Right ventricle myocardium inferior (tissue), 1 donor: ENCODE measurements at regions of chr1 and their contacts with region 1.

Region 1: GRCh38 chr1:116239620-116240310 is 128.6 kb downstream of the MAB21L3 start:
- DNase-seq: no peak
- ATAC-seq: no peak

Region 2: GRCh38 chr1:116075577-116076380 is 164.0 kb before region 1 on chr1:
- intact Hi-C with region 1: no loop called
- DNase-seq: no peak
- ATAC-seq: no peak

Region 3: GRCh38 chr1:116133696-116134650 is 105.8 kb before region 1 on chr1:
- intact Hi-C with region 1: no loop called
- DNase-seq: no peak
- ATAC-seq: no peak

Region 4: DNA sequence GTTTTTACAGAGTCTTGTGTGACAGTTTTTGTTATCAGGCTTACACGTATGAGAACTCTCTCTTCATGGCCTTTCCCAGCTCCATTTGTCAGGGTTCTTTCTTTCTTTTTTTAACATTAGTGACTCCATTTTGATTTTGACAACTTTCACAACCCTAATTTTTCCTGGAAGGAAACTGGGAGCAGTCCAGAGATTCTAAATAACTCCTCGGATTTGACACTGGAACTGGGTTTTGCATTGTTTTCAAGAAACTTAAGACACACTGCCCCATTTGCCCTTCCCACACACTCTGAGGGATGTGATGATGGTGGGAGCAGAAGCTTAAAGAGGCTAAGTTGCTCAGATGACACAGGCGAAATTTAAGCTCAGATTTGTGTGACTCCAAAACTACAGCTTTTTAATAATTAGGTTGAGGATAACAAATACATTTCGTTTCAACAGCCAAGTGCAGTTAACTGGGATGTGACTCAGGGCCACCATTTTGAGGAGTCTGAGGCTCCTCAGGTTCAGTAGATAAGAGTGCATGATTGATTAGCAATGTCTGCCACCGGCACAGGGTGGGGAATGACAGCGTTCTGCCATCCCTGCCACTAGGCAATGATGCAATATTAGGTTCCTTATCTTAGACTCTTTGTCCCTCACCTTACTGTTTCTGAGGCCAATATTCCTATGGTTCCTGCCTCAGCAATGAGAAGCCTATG is 38.2 kb after region 1 on chr1:
- intact Hi-C with region 1: loop called (anchors 5 kb)
- DNase-seq: no peak
- ATAC-seq: no peak